ENCODE measurements at regions of chr1 and their contacts with region 1.

Region 1: DNA sequence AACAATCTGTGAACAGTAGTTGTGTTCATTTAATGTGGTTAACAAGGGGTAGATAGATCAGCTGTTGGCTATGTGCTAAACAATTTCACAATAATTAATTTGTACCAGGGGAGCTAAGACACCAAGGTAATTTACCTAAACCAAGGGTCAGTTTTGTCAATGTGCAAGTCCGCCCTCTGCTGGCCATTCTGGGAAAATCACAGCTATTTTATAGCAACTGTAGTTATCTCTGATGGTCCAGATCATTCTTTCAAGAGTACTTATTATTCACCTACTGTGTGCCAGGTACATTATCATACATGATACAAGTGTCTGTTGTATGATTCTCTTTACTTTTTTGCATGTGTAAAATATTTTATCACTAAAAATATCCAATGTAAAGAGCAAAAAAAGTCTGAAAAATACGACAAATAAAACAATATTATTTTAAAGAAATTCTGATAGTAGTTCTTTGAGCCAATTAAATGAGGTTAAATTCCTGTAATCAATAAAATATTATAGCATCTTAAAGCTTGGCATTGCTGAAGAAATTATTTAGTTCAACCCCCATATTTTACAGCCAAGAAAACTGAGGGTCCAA is 312.3 kb upstream of the FAM78B start:
- DNase-seq: peak; percentile 72
- ATAC-seq: no peak

Region 2: GRCh38 chr1:165933446-165934178 is 545.5 kb before region 1 on chr1:
- intact Hi-C with region 1: loop called (anchors 10 kb)
- DNase-seq: no peak
- ATAC-seq: no peak

Measured in sciatic nerve (tissue), 2 donors.